Aorta (tissue), 5 donors: ENCODE measurements at regions of chr2 and their contacts with region 1.

Region 1: GRCh38 chr2:121356058-121356640 is 71.1 kb upstream of the TFCP2L1 start:
- DNase-seq: no peak
- ATAC-seq: peak; percentile 60
- H3K4me3 ChIP-seq: no peak overlapping the region
- H3K27ac ChIP-seq: no peak overlapping the region
- H3K4me1 ChIP-seq: peaks cover 3 to 10% of the 10 kb centered on the region in 2 donors
- H3K27me3 ChIP-seq: no peaks in the 10 kb centered on the region

Region 2: GRCh38 chr2:121088251-121089165 is 267.6 kb before region 1 on chr2:
- intact Hi-C with region 1: loop called (anchors 5 to 10 kb)
- DNase-seq: peak in 1 of 2 donors; percentile 80
- ATAC-seq: peak; percentile 51
- H3K4me3 ChIP-seq: no peak overlapping the region
- H3K27ac ChIP-seq: no peak overlapping the region
- H3K4me1 ChIP-seq: no peaks in the 10 kb centered on the region
- H3K27me3 ChIP-seq: no peaks in the 10 kb centered on the region

Region 3: GRCh38 chr2:121095257-121096080 is 260.7 kb before region 1 on chr2:
- intact Hi-C with region 1: loop called (anchors 5 to 10 kb)
- DNase-seq: peak; percentile 70 to 81
- ATAC-seq: peak; percentile 53
- H3K4me3 ChIP-seq: no peak overlapping the region
- H3K27ac ChIP-seq: no peak overlapping the region
- H3K4me1 ChIP-seq: no peaks in the 10 kb centered on the region
- H3K27me3 ChIP-seq: no peaks in the 10 kb centered on the region